CD8-positive, alpha-beta T cell (primary cell): ENCODE measurements at regions of chr10 and their contacts with region 1.

Region 1: GRCh38 chr10:101141616-101142532 is 10.8 kb downstream of the TLX1 start:
- DNase-seq: peak; percentile 62 to 86 (median 80)
- ATAC-seq: peak; percentile 86
- H3K4me3 ChIP-seq: no peak overlapping the region
- H3K4me3 Mint-ChIP-seq: no peak overlapping the region
- H3K27ac ChIP-seq: no peak overlapping the region
- H3K27ac Mint-ChIP-seq: no peak overlapping the region
- H3K4me1 ChIP-seq: peaks cover 32% of the 10 kb centered on the region
- H3K4me1 Mint-ChIP-seq: peaks cover 28% of the 10 kb centered on the region
- H3K27me3 ChIP-seq: peaks cover 62 to 72% of the 10 kb centered on the region in 2 experiments
- H3K27me3 Mint-ChIP-seq: peaks cover 79% of the 10 kb centered on the region
- CTCF ChIP-seq: peak; percentile 88

Region 2: GRCh38 chr10:101050208-101051069 is 91.4 kb before region 1 on chr10:
- CTCF ChIA-PET with region 1: interaction called, 12 read pairs
- POLR2A ChIA-PET with region 1: interaction called, 3 read pairs
- intact Hi-C with region 1: no loop called
- DNase-seq: peak; percentile 65 to 83 (median 78)
- ATAC-seq: peak; percentile 98
- H3K4me3 ChIP-seq: no peak overlapping the region
- H3K4me3 Mint-ChIP-seq: peak overlapping the region; percentile 32
- H3K27ac ChIP-seq: no peak overlapping the region
- H3K27ac Mint-ChIP-seq: no peak overlapping the region
- H3K4me1 ChIP-seq: peaks cover 9% of the 10 kb centered on the region
- H3K4me1 Mint-ChIP-seq: peaks cover 9% of the 10 kb centered on the region
- H3K27me3 ChIP-seq: peaks cover 13 to 24% of the 10 kb centered on the region in 2 experiments
- H3K27me3 Mint-ChIP-seq: peaks cover 44% of the 10 kb centered on the region
- CTCF ChIP-seq: peak; percentile 73

Region 3: GRCh38 chr10:101067356-101068083 is 74.4 kb before region 1 on chr10:
- CTCF ChIA-PET with region 1: interaction called, 19 read pairs
- POLR2A ChIA-PET with region 1: no interaction called
- intact Hi-C with region 1: no loop called
- DNase-seq: peak; percentile 49 to 86 (median 77)
- ATAC-seq: peak; percentile 82
- H3K4me3 ChIP-seq: peak overlapping the region; percentile 59 to 64
- H3K4me3 Mint-ChIP-seq: peak overlapping the region; percentile 91
- H3K27ac ChIP-seq: no peak overlapping the region
- H3K27ac Mint-ChIP-seq: no peak overlapping the region
- H3K4me1 ChIP-seq: peaks cover 29% of the 10 kb centered on the region
- H3K4me1 Mint-ChIP-seq: peaks cover 18% of the 10 kb centered on the region
- H3K27me3 ChIP-seq: peaks cover 35 to 39% of the 10 kb centered on the region in 2 experiments
- H3K27me3 Mint-ChIP-seq: peaks cover 41% of the 10 kb centered on the region
- CTCF ChIP-seq: peak; percentile 88

Region 4: DNA sequence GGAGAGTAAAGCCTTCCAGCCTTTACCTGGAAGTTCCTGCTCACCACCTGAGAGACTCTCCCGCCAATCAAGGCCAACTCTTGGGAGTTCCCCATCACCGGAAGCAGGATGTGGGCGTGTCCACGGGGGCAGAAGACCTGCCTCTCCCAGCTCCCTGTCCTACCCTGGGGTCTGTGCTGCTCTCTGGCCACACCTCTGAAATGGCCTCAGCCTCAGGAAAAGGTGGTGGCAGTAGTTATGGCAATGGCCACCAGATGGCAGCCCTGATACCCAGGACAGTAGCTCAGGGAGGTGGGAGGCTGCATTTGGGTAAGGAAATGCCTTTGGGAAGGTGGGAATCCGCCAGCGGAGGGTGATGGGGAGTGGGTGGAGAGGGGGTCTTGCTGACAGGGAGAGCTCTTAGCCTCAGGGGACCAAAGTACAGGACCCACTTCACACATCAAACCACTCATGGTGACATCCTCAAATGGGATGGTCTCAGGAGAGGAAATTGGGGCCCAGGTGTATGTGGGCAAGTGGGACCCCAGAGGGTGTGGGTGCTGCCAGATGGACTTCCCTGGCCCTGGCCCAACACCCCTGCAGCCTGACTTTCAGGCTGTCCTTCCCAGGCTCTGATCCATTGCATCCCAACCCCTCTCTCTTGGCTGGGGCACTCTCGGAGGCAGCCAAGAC is 46.2 kb before region 1 on chr10:
- CTCF ChIA-PET with region 1: interaction called, 479 read pairs
- POLR2A ChIA-PET with region 1: interaction called, 17 read pairs
- intact Hi-C with region 1: loop called in 1 of 2 experiments (anchors 1 kb)
- DNase-seq: peak; percentile 43 to 80 (median 71)
- ATAC-seq: peak; percentile 97
- H3K4me3 ChIP-seq: no peak overlapping the region
- H3K4me3 Mint-ChIP-seq: no peak overlapping the region
- H3K27ac ChIP-seq: no peak overlapping the region
- H3K27ac Mint-ChIP-seq: no peak overlapping the region
- H3K4me1 ChIP-seq: peaks cover 5% of the 10 kb centered on the region
- H3K4me1 Mint-ChIP-seq: peaks cover 2% of the 10 kb centered on the region
- H3K27me3 ChIP-seq: peaks cover 3 to 11% of the 10 kb centered on the region in 2 experiments
- H3K27me3 Mint-ChIP-seq: peaks cover 51% of the 10 kb centered on the region
- CTCF ChIP-seq: peak; percentile 79

Region 5: GRCh38 chr10:101120884-101121653 is 20.8 kb before region 1 on chr10:
- CTCF ChIA-PET with region 1: interaction called, 23 read pairs
- POLR2A ChIA-PET with region 1: interaction called, 4 read pairs
- intact Hi-C with region 1: no loop called
- DNase-seq: peak in 8 of 9 experiments; percentile 19 to 67 (median 46)
- ATAC-seq: peak; percentile 78
- H3K4me3 ChIP-seq: peak overlapping the region; percentile 54 to 63
- H3K4me3 Mint-ChIP-seq: peak overlapping the region; percentile 98
- H3K27ac ChIP-seq: no peak overlapping the region
- H3K27ac Mint-ChIP-seq: peak overlapping the region; percentile 37
- H3K4me1 ChIP-seq: peaks cover 27% of the 10 kb centered on the region
- H3K4me1 Mint-ChIP-seq: peaks cover 28% of the 10 kb centered on the region
- H3K27me3 ChIP-seq: peaks cover 16 to 36% of the 10 kb centered on the region in 2 experiments
- H3K27me3 Mint-ChIP-seq: peaks cover 48% of the 10 kb centered on the region
- CTCF ChIP-seq: no peak

Region 6: DNA sequence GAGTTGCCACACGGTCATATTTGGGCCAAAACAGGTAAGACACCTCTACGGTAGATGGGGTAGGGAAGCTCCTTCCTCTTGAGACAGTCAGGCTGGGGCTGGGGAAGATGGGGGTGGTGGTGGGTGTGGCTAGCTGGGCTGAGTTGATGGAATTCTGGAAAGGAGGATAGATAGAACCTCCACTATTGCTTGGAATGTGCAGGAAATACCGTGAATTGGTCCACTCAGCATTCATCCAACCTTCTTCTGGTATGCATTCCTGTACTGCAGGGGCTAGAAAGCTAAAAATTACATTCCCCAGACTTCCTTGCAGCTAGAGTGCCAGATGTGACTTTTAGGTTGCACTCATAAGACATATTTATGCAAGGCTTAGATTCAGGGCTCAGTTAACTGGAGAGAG is 14.0 kb after region 1 on chr10:
- CTCF ChIA-PET with region 1: interaction called, 60 read pairs
- POLR2A ChIA-PET with region 1: no interaction called
- intact Hi-C with region 1: no loop called
- DNase-seq: no peak
- ATAC-seq: no peak
- H3K4me3 ChIP-seq: no peak overlapping the region
- H3K4me3 Mint-ChIP-seq: no peak overlapping the region
- H3K27ac ChIP-seq: no peak overlapping the region
- H3K27ac Mint-ChIP-seq: no peak overlapping the region
- H3K4me1 ChIP-seq: no peaks in the 10 kb centered on the region
- H3K4me1 Mint-ChIP-seq: no peaks in the 10 kb centered on the region
- H3K27me3 ChIP-seq: peaks cover 0 to 4% of the 10 kb centered on the region in 2 experiments
- H3K27me3 Mint-ChIP-seq: peaks cover 44% of the 10 kb centered on the region
- CTCF ChIP-seq: no peak

Region 7: DNA sequence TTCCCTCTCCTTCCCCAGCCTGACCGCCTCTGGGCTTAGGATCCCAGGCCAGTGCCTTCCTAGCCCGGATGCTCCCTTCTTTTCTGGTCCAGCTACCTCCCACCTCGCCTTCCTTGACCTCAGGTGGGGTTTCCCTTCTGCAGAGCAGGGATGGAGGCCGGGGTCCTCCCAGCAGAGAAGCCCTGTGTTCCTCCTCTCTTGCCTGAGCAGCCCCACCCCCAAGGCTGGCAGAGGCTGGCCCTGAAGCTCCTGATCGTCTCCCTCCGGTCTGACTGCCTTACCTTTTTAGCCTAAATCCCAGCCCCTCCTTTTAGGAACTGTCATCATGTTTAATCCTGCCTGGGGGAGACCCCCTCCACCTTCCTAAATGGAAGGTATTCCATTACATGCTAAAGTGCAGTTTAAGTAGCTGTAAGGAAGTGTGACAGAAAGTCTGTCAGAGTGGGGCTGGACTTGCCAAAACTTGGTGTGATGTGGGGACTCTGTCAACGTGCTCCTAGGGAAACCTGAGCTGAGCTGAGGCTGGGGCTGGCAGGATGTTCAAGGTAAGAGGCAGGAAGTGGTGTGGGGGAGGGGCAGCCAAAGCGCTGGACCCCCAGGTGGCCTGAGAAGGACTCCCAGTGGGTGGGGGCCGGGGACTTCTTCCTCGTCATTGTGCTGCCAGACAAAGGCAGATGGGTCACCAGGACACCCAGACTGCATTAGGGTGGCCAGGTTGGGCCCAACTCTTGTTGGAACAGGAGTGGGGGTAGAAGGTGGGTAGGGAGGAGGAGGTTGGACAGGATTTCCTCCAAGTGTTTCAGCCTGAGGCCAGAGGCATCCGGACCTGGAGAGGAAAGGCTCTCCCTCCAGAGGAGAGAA is 47.9 kb after region 1 on chr10:
- CTCF ChIA-PET with region 1: no interaction called
- POLR2A ChIA-PET with region 1: no interaction called
- intact Hi-C with region 1: no loop called
- DNase-seq: no peak
- ATAC-seq: no peak
- H3K4me3 ChIP-seq: no peak overlapping the region
- H3K4me3 Mint-ChIP-seq: no peak overlapping the region
- H3K27ac ChIP-seq: no peak overlapping the region
- H3K27ac Mint-ChIP-seq: no peak overlapping the region
- H3K4me1 ChIP-seq: no peaks in the 10 kb centered on the region
- H3K4me1 Mint-ChIP-seq: no peaks in the 10 kb centered on the region
- H3K27me3 ChIP-seq: no peaks in the 10 kb centered on the region
- H3K27me3 Mint-ChIP-seq: peaks cover 13% of the 10 kb centered on the region
- CTCF ChIP-seq: no peak